Activated T-helper 1 cell treated with anti-CD3 and anti-CD28 coated beads, Interleukin-12 subunit alpha, Interleukin-12 subunit beta, Interleukin-2, Interleukin-4 antibody, amounts not matched to agents 30 ng/mL and 10 ng/mL and 1 ng/mL, durations not matched to agents 14 hours and 24 hours and 36 hours (primary cell): ENCODE measurements at regions of chr17 and their contacts with region 1.

Region 1: GRCh38 chr17:74961657-74962490 is 10.7 kb downstream of the HID1 start:
- DNase-seq: peak; percentile 70
- H3K4me3 Mint-ChIP-seq: no peak overlapping the region
- H3K27ac Mint-ChIP-seq: no peak overlapping the region
- H3K4me1 Mint-ChIP-seq: no peaks in the 10 kb centered on the region
- H3K27me3 Mint-ChIP-seq: peaks cover 6% of the 10 kb centered on the region

Region 2: DNA sequence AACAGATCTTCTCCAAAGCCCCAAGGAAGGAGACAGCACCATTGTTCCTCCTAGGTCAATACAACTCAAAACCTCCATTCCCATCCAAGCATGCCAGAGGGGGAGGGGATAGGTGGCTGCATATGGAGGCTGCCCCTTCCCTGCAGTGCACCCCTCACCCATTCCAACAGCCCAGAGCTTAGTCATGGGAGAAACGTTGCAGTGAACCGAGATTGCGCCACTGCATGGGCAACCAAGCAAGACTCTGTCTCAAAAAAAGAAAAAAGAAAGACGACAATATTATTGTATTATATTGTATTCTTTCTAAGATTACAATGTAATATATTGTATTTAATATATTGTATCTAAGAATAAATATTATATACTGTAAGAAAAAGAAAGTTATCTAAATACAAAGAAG is 302.0 kb before region 1 on chr17:
- intact Hi-C with region 1: loop called (anchors 2 kb)
- DNase-seq: no peak
- H3K4me3 Mint-ChIP-seq: no peak overlapping the region
- H3K27ac Mint-ChIP-seq: no peak overlapping the region
- H3K4me1 Mint-ChIP-seq: peaks cover 8% of the 10 kb centered on the region
- H3K27me3 Mint-ChIP-seq: peaks cover 59% of the 10 kb centered on the region

Region 3: DNA sequence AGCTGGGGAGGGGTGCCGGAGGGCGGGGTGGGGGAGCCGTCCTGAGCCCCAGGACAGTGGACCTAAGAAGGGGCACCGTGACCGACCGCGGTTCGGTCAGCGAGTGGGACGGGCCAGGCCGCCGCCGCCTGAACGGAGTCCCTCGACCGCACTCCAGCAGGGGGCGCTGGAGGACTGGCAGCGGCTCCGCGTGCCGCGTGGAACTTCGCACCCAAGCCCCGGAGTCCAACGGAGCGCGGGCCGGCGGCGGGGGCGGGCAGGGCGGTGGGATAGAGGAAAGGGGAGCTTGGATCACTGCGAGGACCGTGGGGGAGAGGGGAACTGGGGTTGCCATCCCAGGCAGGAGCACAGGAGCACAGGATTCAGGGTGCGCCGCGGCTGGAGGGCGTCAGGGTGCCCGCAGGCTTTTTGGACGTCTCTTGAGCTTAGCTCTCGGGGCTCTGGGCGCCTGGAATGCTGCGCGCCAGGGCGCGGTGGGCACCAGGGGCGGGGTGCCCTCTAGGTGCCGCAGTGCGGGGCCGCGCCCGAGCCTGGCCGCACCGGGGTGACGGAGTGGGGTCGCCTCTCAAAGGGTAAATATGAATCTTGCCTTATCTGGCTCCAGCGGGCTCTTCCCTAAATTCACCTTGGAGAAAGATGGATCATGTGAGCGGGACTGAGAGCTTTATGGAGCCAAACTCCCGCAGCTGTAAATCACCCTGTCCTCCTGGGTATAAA is 38.2 kb before region 1 on chr17:
- intact Hi-C with region 1: loop called (anchors 1 kb)
- DNase-seq: peak; percentile 57
- H3K4me3 Mint-ChIP-seq: no peak overlapping the region
- H3K27ac Mint-ChIP-seq: no peak overlapping the region
- H3K4me1 Mint-ChIP-seq: no peaks in the 10 kb centered on the region
- H3K27me3 Mint-ChIP-seq: peaks cover 51% of the 10 kb centered on the region

Region 4: DNA sequence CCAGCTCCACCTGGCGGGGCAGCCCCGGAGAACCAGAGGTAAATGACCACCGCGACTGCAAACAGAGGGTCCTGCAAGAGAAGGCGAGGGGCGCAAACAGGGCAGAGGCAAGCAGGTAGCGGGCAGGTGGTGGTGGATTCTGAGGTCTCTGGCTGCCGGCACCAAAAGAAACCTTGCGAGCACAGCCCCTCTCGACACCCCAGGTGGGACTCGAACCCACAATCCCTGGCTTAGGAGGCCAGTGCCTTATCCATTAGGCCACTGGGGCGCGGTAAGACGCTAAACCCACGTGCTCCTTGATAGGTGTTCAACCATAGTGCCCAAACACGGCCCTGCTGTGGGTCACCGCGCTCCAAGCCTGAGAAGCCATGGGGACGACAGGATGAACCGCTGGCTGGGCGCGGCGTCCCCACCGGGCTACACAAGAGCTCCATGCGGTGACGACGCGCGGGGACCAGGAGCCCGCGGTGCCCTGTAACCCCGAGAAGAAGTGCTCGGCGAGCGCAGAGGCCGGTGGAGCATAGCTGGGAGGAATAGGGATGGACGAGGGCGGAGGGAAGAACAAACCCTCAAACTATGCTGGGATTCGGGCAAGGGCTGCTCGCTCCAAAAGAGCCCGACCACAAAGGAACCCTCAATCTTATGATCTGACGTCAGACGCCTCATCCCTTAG is 72.5 kb after region 1 on chr17:
- intact Hi-C with region 1: loop called (anchors 2 kb)
- DNase-seq: peak; percentile 79
- H3K4me3 Mint-ChIP-seq: peak overlapping the region; percentile 93
- H3K27ac Mint-ChIP-seq: peak overlapping the region; percentile 94
- H3K4me1 Mint-ChIP-seq: peaks cover 52% of the 10 kb centered on the region
- H3K27me3 Mint-ChIP-seq: peaks cover 10% of the 10 kb centered on the region

Region 5: DNA sequence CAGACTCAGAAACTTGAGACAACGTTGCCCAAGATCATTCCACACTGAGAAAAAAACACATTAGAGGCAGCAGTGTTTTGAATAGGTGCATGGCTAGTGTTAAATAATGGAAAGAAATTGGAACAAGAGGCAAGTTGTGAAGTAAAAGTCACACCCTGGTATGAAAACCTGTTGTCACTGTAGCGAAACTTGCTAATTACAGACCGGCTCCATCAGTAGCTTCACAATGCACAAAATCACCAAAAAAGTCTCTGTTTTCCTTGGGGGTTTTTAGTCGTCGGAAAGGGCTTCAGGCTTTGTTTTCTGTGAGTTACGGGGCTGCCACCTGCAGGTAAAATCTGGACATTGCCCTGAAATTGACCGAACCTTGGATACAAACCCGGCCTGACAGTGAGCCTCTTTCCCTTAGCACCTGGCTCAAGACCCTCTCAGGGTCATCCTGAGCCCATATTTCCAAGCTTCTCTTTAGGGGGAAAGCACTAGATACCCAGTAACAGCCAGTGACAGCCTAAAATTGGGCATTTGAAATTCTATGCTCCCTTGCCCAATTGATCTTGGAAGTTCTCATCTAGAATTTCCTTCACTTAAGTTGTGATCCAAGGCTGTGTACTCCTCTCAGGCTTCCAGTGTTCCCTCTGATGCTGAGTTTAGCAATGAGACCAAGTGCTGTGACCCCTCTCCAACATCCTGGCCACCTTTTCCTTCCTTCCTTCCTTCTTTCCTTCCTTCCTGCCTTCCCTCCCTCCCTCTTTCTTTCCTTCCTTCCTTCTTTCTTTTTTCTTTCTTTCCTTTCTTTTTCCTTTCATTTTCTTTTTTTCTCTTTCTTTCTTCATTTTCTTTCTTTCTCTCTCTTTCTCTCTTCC is 450.8 kb after region 1 on chr17:
- intact Hi-C with region 1: loop called (anchors 1 kb)
- DNase-seq: peak; percentile 69
- H3K4me3 Mint-ChIP-seq: no peak overlapping the region
- H3K27ac Mint-ChIP-seq: no peak overlapping the region
- H3K4me1 Mint-ChIP-seq: peaks cover 29% of the 10 kb centered on the region
- H3K27me3 Mint-ChIP-seq: peaks cover 10% of the 10 kb centered on the region